Psoas muscle (tissue), 8 donors: ENCODE measurements at regions of chr19 and their contacts with region 1.

Region 1: DNA sequence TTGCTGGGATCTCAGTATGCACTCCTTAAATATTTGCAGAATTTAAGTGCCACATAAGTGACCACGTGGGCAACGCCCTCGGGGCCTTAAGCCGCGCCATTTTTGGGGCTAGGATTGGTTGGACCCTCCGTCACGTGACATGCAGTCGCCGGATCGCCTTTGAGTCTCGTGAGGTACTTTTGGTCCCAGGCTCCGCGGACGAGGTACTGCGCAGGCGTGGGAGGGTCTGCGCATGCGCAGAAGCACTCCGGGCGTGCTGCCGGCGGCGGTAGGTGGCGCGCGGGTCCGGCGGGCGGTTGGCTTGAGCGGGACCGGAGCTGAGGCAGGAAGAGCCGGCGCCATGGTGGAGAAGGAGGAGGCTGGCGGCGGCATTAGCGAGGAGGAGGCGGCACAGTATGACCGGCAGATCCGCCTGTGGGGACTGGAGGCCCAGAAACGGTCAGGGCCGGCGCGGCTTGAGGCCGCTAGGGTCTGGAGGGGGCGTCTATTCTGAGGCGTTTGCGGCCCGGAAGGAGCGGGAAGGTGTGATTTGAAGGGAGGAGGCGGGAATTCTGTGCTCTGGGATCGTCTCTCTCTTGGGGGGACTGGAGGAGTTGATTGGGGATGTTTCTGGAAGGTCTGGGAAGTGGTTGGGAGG is at the start of gene SAE1:
- DNase-seq: peak; percentile 94 to 97
- ATAC-seq: peak; percentile 91 to 98 (median 94)
- H3K4me3 ChIP-seq: peak within 1 kb of the TSS; percentile 80
- H3K27ac ChIP-seq: peak within 1 kb of the TSS; percentile 77
- H3K4me1 ChIP-seq: no peaks in the 10 kb centered on the region
- H3K27me3 ChIP-seq: no peaks in the 10 kb centered on the region
- CTCF ChIP-seq: peak; percentile 48
- total RNA-seq, gene SAE1: 37.8 to 55.8 (median 41.5) TPM

Region 2: DNA sequence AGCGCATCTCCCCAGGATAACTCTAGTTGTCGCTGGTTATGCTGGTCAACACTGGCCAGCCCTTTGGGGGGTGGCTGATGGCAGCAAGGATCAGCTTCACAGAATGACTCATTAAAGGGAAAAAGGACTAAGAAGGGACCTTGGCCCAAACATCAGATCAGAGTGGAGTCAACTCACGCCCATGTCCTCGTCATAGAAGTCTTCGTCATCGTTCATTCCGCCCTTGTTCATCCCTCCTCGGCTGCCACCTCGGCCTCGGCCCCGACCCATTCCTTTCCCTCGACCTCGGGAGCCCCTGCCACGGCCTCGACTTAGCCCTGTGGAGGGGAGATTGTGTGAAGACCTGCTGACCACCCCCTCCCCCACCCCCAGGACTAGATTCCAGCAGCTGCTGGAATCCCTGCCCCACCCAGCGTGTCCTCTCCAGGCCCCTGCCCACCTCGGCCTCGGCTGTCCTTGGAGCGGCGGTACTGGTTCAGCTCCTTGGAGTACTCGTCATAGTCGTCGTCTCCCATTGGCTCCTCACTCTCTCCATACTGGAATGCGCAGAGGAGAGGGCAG is 45.8 kb before region 1 on chr19:
- intact Hi-C with region 1: loop called in 1 of 2 experiments (anchors 2 kb)
- DNase-seq: peak in 1 of 2 donors; percentile 29
- ATAC-seq: no peak
- H3K4me3 ChIP-seq: no peak overlapping the region
- H3K27ac ChIP-seq: no peak overlapping the region
- H3K4me1 ChIP-seq: peaks cover 2% of the 10 kb centered on the region
- H3K27me3 ChIP-seq: no peaks in the 10 kb centered on the region
- CTCF ChIP-seq: no peak